AG04449 (cell line): ENCODE measurements at regions of chr17 and their contacts with region 1.

Region 1: DNA sequence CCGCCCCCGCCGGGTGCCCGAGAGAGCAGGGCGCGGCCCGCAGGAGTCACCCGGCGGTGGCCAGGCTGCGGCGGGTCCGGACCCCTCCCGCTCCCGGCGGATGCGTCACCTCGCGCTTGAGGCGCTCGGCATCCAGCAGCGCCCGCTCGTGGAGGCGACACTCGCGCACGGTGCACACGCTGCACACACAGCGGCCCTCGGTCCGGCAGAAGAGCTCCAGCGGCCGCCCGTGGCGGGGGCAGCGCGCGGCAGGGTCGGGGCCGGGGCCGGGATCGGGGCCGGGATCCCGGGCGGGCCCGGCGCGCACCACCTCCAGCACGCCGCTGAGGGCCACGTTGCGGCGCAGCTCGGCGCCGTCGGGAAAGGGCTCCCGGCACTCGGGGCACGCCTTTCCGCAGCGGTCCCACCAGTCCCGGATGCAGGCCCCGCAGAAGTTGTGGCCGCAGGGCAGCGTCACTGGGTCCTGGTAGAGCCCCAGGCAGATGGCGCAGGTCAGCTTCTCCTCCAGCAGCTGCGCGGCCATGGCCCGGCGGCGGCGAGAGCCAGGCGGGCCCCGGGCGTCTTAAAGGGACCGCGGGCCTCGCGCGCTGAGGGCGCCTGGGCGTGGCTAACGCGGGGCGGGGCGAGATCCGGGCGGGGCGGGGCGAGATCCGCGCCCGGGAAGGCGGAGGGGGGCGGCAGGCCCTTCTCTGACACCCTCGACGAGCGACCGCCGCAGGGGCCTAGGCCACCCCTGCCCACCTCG is at the start of gene TRIM65:
- DNase-seq: no peak
- H3K4me3 ChIP-seq: peak within 1 kb of the TSS; percentile 84
- CTCF ChIP-seq: peak; percentile 65

Region 2: DNA sequence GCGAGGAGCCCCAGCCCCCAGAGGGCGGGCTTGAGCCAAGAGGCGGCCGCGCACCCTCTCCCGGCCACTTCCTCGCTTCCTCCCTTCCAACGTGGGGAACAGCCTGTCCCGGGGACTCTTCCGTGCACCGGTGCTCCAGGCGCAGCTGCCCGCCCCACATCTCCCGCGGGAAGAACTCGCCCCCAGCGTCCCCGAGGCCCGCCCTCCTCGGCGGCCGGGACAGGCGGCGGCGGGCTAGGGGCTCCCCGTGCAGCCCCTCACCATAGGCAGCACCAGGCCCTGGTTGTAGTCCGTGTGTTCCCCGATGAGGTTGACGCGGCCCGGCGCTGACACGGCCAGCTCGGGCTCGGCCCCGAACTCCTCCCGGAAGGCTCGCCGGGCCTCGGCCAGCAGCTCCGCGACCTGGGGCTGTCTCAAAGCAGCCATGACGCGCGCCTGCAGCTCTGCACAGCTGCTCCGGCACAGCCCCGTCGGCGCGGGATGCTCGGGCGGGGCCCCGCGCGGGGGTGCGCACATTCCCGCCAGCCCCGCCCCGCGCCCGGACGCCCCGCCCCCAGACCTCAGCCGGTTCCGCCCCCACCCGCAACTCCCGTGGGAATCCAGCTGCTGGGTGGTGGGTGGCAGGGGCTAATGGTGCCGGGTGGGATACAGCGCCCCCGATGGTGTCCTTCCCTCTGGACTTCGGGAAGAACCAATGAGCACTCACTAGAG is 131.7 kb before region 1 on chr17 and contains the start of gene GALK1:
- CTCF ChIA-PET with region 1: interaction called, 17 read pairs
- POLR2A ChIA-PET with region 1: interaction called, 3 read pairs
- DNase-seq: no peak
- H3K4me3 ChIP-seq: peak within 1 kb of the TSS; percentile 66
- CTCF ChIP-seq: peak; percentile 77

Region 3: DNA sequence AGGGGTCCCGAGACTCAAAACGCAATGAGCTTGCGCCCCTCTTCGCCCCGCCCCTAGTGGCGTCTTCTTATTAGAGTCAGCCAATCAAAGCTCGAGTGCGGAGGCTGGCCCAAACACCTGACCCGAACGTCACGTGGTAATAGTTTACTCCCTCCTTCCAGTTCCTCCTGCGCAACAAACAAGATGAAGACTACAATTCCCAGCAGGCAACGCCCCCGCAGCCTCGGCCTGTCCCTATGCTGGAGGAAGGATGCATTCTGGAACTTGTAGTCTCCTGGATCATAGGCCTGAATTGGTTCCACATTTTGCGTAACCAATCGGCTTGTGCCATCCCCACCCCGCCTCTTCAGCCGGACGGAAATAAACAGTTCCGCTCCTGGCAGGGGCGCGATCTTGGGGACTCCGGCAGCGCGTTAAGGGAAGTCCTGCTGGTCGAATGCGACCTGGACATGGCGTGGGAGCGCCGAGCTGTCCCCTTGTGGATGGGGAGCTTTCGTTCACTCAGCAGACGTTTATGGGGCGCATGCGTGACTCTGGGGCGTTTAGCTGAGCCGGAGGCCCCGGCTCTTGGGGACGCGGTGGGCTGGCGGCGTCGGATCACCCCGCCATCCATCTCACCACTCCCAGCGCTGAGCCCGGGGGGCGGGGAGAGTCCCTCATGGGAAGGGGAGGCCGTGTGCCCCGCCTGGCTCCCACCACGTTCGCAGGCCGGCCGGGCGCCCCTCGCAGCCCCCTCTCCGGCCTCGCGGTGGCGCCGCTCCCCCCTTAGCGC is 41.1 kb before region 1 on chr17 and contains the start of gene WBP2:
- CTCF ChIA-PET with region 1: interaction called, 19 read pairs
- POLR2A ChIA-PET with region 1: interaction called, 4 read pairs
- DNase-seq: peak; percentile 99
- H3K4me3 ChIP-seq: peak within 1 kb of the TSS; percentile 97
- CTCF ChIP-seq: peak; percentile 57

Region 4: DNA sequence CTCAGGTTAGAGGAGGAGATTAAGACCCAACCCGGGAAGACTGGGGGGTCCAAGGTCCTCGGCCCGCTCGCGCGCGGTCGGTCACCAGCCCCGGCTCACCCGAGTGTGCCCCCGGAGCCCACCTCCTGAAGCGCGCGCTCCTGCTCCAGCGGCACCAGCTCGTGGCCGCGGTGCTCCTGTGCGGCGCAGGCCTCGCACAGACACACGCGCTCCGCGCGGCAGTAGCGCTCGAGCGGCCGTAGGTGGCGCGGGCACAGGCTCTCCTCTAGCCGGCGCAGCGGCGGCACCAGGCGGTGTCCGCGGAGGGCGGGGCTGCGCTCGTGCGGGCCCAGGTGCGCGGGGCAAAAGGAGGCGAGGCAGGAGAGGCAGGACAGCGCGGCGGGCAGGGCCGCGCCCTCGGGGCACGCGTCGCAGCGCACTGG is 18.8 kb before region 1 on chr17:
- CTCF ChIA-PET with region 1: interaction called, 32 read pairs
- POLR2A ChIA-PET with region 1: interaction called, 8 read pairs
- DNase-seq: no peak
- H3K4me3 ChIP-seq: peak overlapping the region; percentile 57
- CTCF ChIP-seq: peak; percentile 77

Region 5: DNA sequence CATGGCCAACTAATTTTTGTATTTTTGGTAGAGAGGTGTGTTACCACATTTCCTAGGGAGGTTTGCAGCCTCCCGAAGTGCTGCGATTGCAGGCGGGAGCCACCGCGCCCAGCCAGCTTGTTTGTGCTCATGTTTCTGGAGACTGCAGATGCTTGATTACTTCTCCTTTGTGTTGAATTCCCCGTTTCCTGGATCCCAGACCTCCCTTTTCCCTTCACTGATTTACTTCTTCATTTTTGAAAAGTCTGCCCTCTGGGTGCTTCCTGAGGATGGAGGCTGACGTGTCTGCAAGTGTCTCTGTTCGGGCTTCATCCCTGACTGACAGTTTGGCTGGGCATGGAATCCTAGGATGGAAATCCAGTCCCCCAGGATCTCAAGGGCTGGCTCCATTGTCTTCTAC is 11.2 kb before region 1 on chr17:
- CTCF ChIA-PET with region 1: interaction called, 23 read pairs
- POLR2A ChIA-PET with region 1: interaction called, 8 read pairs
- DNase-seq: no peak
- H3K4me3 ChIP-seq: no peak overlapping the region
- CTCF ChIP-seq: no peak